ENCODE measurements at regions of chr17 and their contacts with region 1.

Region 1: GRCh38 chr17:2511462-2512369 is at the start of gene METTL16:
- DNase-seq: peak; percentile 94 to 99 (median 96)
- H3K4me3 ChIP-seq: peak within 1 kb of the TSS; percentile 77 to 99
- H3K4me3 Mint-ChIP-seq: peak within 1 kb of the TSS in 4 of 8 donors; percentile 53 to 66 (median 59)
- H3K27ac ChIP-seq: peak within 1 kb of the TSS; percentile 77
- H3K27ac Mint-ChIP-seq: peak within 1 kb of the TSS in 6 of 7 donors; percentile 35 to 89 (median 42)
- H3K4me1 ChIP-seq: peaks cover 36% of the 10 kb centered on the region
- H3K4me1 Mint-ChIP-seq: peaks cover 13 to 20% (median 16%) of the 10 kb centered on the region in 4 donors
- H3K27me3 ChIP-seq: no peaks in the 10 kb centered on the region
- H3K27me3 Mint-ChIP-seq: no peaks in the 10 kb centered on the region
- total RNA-seq, gene METTL16: 50.1 to 51.8 TPM

Region 2: GRCh38 chr17:2401426-2402221 is 110.1 kb before region 1 on chr17:
- CTCF ChIA-PET with region 1: no interaction called
- POLR2A ChIA-PET with region 1: no interaction called
- intact Hi-C with region 1: loop called (anchors 2 kb)
- DNase-seq: peak; percentile 99 to 100 (median 100)
- H3K4me3 ChIP-seq: peak overlapping the region; percentile 65 to 89
- H3K4me3 Mint-ChIP-seq: peak overlapping the region; percentile 90 to 100 (median 98)
- H3K27ac ChIP-seq: peak overlapping the region; percentile 95
- H3K27ac Mint-ChIP-seq: peak overlapping the region; percentile 99 to 100 (median 100)
- H3K4me1 ChIP-seq: peaks cover 35% of the 10 kb centered on the region
- H3K4me1 Mint-ChIP-seq: peaks cover 18 to 54% (median 33%) of the 10 kb centered on the region in 4 donors
- H3K27me3 ChIP-seq: no peaks in the 10 kb centered on the region
- H3K27me3 Mint-ChIP-seq: peaks cover 0 to 8% of the 10 kb centered on the region in 2 donors

Region 3: DNA sequence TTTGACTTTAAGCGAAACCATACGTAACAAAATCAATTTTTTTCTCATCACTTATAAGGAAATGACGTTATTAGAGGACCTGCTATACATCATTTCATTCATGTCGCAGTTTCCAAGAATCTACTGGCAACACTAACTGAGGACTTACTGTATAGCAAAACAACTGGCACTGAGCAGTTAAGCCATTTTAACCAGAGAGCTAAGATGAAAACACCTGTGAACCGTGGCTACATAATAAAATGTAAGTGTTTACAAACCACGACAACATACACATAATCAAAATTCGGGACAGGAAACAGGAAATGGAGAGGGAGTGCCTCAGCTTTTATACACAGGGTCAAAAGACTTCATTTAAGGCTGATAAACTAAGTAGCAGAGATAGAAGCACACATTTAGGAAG is 29.5 kb before region 1 on chr17:
- CTCF ChIA-PET with region 1: no interaction called
- POLR2A ChIA-PET with region 1: interaction called, 26 read pairs
- intact Hi-C with region 1: no loop called
- DNase-seq: peak in 4 of 5 donors; percentile 59 to 73 (median 64)
- H3K4me3 ChIP-seq: peak overlapping the region in 1 of 2 donors; percentile 0
- H3K4me3 Mint-ChIP-seq: peak overlapping the region; percentile 30 to 86 (median 78)
- H3K27ac ChIP-seq: peak overlapping the region; percentile 20
- H3K27ac Mint-ChIP-seq: peak overlapping the region; percentile 70 to 98 (median 94)
- H3K4me1 ChIP-seq: peaks cover 26% of the 10 kb centered on the region
- H3K4me1 Mint-ChIP-seq: peaks cover 34 to 49% (median 43%) of the 10 kb centered on the region in 4 donors
- H3K27me3 ChIP-seq: no peaks in the 10 kb centered on the region
- H3K27me3 Mint-ChIP-seq: no peaks in the 10 kb centered on the region

Region 4: DNA sequence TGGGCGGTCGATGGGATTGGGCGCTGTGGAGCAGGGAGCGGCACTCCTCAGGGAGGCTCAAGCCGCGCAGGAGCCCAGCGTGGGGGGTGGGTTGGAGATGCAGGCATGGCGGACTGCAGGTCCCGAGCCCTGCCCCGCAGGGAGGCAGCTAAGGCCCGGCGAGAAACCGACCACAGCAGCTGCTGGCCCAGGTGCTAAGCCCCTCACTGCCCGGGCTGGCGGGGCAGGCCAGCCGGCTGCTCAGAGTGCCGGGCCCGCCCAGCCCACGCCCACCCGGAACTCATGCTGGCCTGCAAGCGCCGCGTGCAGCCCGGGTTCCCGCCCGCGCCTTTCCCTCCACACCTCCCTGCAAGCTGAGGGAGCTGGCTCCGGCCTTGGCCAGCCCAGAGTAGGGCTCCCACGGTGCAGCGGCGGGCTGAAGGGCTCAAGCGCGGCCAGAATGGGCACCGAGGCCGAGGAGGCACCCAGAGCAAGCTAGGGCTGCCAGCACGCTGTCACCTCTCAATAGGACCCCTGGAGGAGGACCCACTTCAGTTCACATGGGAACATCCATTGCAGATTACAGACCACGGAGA is 20.5 kb after region 1 on chr17:
- CTCF ChIA-PET with region 1: no interaction called
- POLR2A ChIA-PET with region 1: no interaction called
- intact Hi-C with region 1: no loop called
- DNase-seq: no peak
- H3K4me3 ChIP-seq: no peak overlapping the region
- H3K4me3 Mint-ChIP-seq: no peak overlapping the region
- H3K27ac ChIP-seq: no peak overlapping the region
- H3K27ac Mint-ChIP-seq: no peak overlapping the region
- H3K4me1 ChIP-seq: peaks cover 6% of the 10 kb centered on the region
- H3K4me1 Mint-ChIP-seq: peaks cover 6 to 10% (median 8%) of the 10 kb centered on the region in 4 donors
- H3K27me3 ChIP-seq: no peaks in the 10 kb centered on the region
- H3K27me3 Mint-ChIP-seq: no peaks in the 10 kb centered on the region

Region 5: DNA sequence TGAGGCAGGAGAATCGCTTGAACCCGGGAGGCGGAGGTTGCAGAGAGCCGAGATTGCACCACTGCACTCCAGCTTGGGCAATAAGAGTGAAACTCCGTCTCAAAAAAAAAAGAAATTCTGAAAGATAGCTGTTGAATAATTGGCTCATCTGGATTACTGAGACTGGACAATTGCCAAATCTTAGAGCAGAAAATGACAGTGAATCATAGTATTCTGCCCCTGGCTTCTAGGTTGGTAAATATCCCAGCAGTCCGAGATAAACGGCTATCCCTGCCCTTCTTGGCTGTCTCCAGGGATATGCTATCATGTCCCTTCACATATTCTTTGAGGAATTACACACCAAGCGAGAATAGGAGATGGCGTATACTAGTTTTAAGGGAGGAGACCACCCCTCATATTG is 35.5 kb after region 1 on chr17:
- CTCF ChIA-PET with region 1: no interaction called
- POLR2A ChIA-PET with region 1: no interaction called
- intact Hi-C with region 1: no loop called
- DNase-seq: no peak
- H3K4me3 ChIP-seq: no peak overlapping the region
- H3K4me3 Mint-ChIP-seq: no peak overlapping the region
- H3K27ac ChIP-seq: no peak overlapping the region
- H3K27ac Mint-ChIP-seq: no peak overlapping the region
- H3K4me1 ChIP-seq: no peaks in the 10 kb centered on the region
- H3K4me1 Mint-ChIP-seq: no peaks in the 10 kb centered on the region
- H3K27me3 ChIP-seq: no peaks in the 10 kb centered on the region
- H3K27me3 Mint-ChIP-seq: peaks cover 3 to 8% of the 10 kb centered on the region in 2 donors

Region 6: GRCh38 chr17:2592971-2593820 is 81.5 kb after region 1 on chr17 and contains the start of gene PAFAH1B1:
- CTCF ChIA-PET with region 1: no interaction called
- POLR2A ChIA-PET with region 1: interaction called, 16 read pairs
- intact Hi-C with region 1: loop called (anchors 1 kb)
- DNase-seq: peak; percentile 93 to 97 (median 96)
- H3K4me3 ChIP-seq: peak within 1 kb of the TSS; percentile 78 to 91
- H3K4me3 Mint-ChIP-seq: peak within 1 kb of the TSS; percentile 91 to 100 (median 95)
- H3K27ac ChIP-seq: peak within 1 kb of the TSS; percentile 99
- H3K27ac Mint-ChIP-seq: peak within 1 kb of the TSS; percentile 90 to 97 (median 96)
- H3K4me1 ChIP-seq: peaks cover 38% of the 10 kb centered on the region
- H3K4me1 Mint-ChIP-seq: peaks cover 18 to 42% (median 31%) of the 10 kb centered on the region in 4 donors
- H3K27me3 ChIP-seq: no peaks in the 10 kb centered on the region
- H3K27me3 Mint-ChIP-seq: no peaks in the 10 kb centered on the region
- total RNA-seq, gene PAFAH1B1: 152 to 153 TPM

Region 7: DNA sequence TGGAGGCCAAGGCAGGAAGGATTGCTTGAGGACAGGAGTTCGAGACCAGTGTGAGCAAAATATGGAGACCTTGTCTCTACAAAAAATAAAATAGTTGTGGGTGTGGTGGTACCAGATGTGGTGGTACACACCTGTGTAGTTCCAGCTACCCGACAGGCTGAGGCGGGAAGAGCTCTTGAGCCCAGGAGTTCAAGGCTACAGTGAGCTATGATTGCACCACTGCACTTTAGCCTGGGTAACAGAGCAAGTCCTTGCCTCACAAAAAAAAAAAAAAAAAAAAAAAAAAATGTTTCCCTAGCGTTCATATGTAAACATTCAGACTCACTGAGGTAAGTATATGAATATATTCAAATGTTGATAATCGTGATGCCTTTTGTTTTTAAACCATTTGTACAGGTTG is 160.3 kb after region 1 on chr17:
- CTCF ChIA-PET with region 1: interaction called, 3 read pairs
- POLR2A ChIA-PET with region 1: no interaction called
- intact Hi-C with region 1: loop called (anchors 1 kb)
- DNase-seq: no peak
- H3K4me3 ChIP-seq: no peak overlapping the region
- H3K4me3 Mint-ChIP-seq: no peak overlapping the region
- H3K27ac ChIP-seq: no peak overlapping the region
- H3K27ac Mint-ChIP-seq: peak overlapping the region in 1 of 7 donors; percentile 48
- H3K4me1 ChIP-seq: peaks cover 3% of the 10 kb centered on the region
- H3K4me1 Mint-ChIP-seq: peaks cover 3 to 6% (median 4%) of the 10 kb centered on the region in 4 donors
- H3K27me3 ChIP-seq: no peaks in the 10 kb centered on the region
- H3K27me3 Mint-ChIP-seq: no peaks in the 10 kb centered on the region

Region 8: GRCh38 chr17:2711601-2712299 is 200.0 kb after region 1 on chr17 and contains the start of gene CLUH:
- CTCF ChIA-PET with region 1: no interaction called
- POLR2A ChIA-PET with region 1: no interaction called
- intact Hi-C with region 1: loop called (anchors 1 kb)
- DNase-seq: peak; percentile 93 to 97 (median 95)
- H3K4me3 ChIP-seq: peak within 1 kb of the TSS; percentile 69 to 77
- H3K4me3 Mint-ChIP-seq: peak within 1 kb of the TSS; percentile 85 to 92 (median 89)
- H3K27ac ChIP-seq: peak within 1 kb of the TSS; percentile 62
- H3K27ac Mint-ChIP-seq: peak within 1 kb of the TSS; percentile 77 to 93 (median 91)
- H3K4me1 ChIP-seq: peaks cover 40% of the 10 kb centered on the region
- H3K4me1 Mint-ChIP-seq: peaks cover 23 to 42% (median 33%) of the 10 kb centered on the region in 4 donors
- H3K27me3 ChIP-seq: no peaks in the 10 kb centered on the region
- H3K27me3 Mint-ChIP-seq: no peaks in the 10 kb centered on the region
- total RNA-seq, gene CLUH: 43.5 to 44.1 TPM

Measured in CD4-positive, alpha-beta memory T cell (primary cell).